Colonic mucosa (tissue), 4 donors: ENCODE measurements at regions of chr6 and their contacts with region 1.

Region 1: DNA sequence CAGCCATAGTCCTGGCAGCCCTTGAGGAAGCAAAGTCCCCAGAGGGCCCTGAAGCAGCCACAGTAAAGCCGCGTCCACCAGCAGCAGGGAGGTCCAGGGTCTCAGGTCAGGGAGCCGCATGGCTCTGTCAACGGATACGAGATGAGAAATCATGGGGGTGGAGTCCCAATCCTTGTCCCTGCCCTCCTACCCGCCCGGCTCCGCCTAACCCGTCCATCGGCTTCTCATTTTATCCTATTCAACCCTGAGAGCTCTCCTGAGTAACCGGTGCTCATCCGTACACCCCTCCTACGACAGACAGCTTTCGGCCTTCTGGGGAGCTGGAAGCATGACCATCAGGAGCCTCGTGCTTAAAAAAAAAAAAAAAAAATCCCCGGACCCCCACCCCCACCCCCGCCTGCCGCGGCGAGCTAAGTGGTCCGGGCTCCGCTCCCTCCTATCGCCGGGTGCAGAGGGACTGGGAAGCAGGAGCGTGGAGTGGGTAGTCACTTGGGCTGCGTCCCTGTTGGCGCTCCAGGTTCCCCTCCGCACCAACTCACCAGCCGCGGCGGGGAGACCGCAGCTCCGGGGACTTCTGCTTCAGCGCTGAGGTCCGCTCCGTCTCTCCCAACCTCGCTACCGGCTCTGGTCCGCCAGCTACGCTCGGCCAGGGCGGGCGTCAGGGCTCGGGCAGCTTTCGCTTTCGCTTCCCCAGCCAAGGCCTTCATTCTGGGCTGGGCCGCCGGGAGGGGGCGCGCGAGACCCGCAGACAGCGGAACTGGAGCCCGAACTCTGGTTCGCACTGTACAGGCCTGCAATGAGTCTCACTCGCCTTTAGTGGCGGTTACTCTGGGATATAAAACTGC is at the start of gene TAP2:
- DNase-seq: peak; percentile 99
- H3K4me3 ChIP-seq: peak within 1 kb of the TSS; percentile 60
- H3K27ac ChIP-seq: peak within 1 kb of the TSS; percentile 94
- H3K4me1 ChIP-seq: peaks cover 14% of the 10 kb centered on the region
- H3K27me3 ChIP-seq: no peaks in the 10 kb centered on the region
- CTCF ChIP-seq: peak; percentile 98
- total RNA-seq, gene TAP2: 45.2 to 95.1 TPM

Region 2: GRCh38 chr6:32853541-32854375 is 15.4 kb after region 1 on chr6 and contains the starts of genes PSMB9 and TAP1:
- intact Hi-C with region 1: loop called (anchors 2 kb)
- DNase-seq: peak; percentile 96
- H3K4me3 ChIP-seq: peak within 1 kb of the TSS; percentile 97
- H3K27ac ChIP-seq: peak within 1 kb of the TSS; percentile 100
- H3K4me1 ChIP-seq: peaks cover 10% of the 10 kb centered on the region
- H3K27me3 ChIP-seq: no peaks in the 10 kb centered on the region
- CTCF ChIP-seq: peak; percentile 68
- total RNA-seq, gene PSMB9: 43.0 to 66.0 TPM
- total RNA-seq, gene TAP1: 86.9 to 128 TPM

Region 3: DNA sequence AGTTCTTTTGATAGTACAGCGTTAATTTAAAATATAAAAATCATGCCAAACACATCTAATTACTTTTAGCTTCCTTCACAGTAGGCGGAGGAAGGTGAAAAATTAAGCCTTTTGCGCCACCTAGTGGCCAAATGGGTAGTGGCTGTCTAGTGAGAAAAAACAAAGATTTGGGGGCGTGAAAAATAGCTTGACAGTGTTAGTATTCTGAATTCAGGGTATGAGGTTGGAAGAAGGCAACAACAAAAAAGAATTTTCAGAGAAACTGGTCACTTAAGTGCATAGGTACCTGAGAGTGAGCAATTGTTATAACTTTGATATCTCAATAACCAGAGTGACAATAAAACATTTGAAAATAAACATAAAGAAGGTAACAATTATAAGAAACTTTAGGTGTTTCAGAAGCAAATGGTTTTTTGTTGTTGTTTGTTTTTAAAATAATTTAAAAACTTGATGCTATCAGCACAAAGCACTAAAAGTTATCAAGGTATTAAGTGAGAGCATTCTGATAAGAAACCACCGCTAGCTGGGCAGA is 30.0 kb after region 1 on chr6:
- intact Hi-C with region 1: loop called (anchors 5 kb)
- DNase-seq: peak; percentile 87
- H3K4me3 ChIP-seq: no peak overlapping the region
- H3K27ac ChIP-seq: no peak overlapping the region
- H3K4me1 ChIP-seq: no peaks in the 10 kb centered on the region
- H3K27me3 ChIP-seq: no peaks in the 10 kb centered on the region
- CTCF ChIP-seq: peak; percentile 95